BJ (cell line): ENCODE measurements at regions of chr15 and their contacts with region 1.

Region 1: GRCh38 chr15:43514241-43515057 is 3.0 kb upstream of the MAP1A start:
- DNase-seq: no peak
- H3K4me3 ChIP-seq: no peak overlapping the region
- H3K27me3 ChIP-seq: no peaks in the 10 kb centered on the region
- CTCF ChIP-seq: peak; percentile 68

Region 2: GRCh38 chr15:43133430-43134156 is 380.9 kb before region 1 on chr15 and contains the start of gene TMEM62:
- CTCF ChIA-PET with region 1: no interaction called
- POLR2A ChIA-PET with region 1: no interaction called
- DNase-seq: no peak
- H3K4me3 ChIP-seq: peak within 1 kb of the TSS; percentile 62
- H3K27me3 ChIP-seq: no peaks in the 10 kb centered on the region
- CTCF ChIP-seq: no peak
- polyA plus RNA-seq, gene TMEM62: 4.2 and 6.6 TPM in 2 replicates

Region 3: DNA sequence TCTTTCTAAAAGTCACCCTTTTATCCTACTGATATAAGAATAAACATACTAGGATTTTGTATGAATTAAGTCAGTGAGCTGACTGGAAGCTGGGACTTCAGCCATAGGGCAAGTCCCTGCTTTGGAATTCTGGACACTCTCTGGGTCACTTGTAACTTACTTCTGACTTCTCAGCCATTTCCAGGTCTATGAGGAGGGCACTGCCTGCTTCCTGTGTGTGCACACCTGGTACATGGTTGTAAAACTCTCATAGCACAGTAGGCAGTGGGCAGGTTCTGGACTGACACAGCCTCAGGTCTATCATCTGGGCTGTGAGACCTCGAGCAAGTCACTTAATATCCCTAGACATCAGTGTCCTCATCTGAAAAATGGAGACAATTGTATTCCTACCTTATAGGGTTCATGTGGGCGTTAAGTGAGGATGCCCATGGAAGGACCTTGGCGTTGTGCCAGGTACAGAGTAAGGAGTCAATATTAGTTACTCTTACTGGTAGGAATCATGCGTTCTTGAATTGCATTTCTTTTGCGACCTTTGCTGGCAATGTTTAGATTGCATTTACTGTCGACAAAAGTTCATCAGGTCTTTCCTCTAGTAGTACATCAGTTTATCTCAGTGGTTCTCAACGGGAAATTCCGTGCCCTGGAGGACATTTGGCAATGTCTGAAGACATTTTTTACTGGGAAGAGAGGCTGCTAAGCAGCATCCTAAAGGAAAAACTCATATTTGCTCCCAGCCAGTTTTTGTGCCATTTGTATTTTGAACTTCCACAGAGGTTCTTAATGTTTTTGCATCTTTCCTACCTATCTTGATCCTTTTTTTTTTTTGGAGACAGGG is 220.1 kb before region 1 on chr15:
- CTCF ChIA-PET with region 1: no interaction called
- POLR2A ChIA-PET with region 1: no interaction called
- DNase-seq: no peak
- H3K4me3 ChIP-seq: no peak overlapping the region
- H3K27me3 ChIP-seq: peaks cover 23% of the 10 kb centered on the region
- CTCF ChIP-seq: no peak

Region 4: GRCh38 chr15:43440721-43441281 is 73.6 kb before region 1 on chr15:
- CTCF ChIA-PET with region 1: interaction called, 32 read pairs
- POLR2A ChIA-PET with region 1: no interaction called
- DNase-seq: peak; percentile 94
- H3K4me3 ChIP-seq: no peak overlapping the region
- H3K27me3 ChIP-seq: no peaks in the 10 kb centered on the region
- CTCF ChIP-seq: peak; percentile 51

Region 5: DNA sequence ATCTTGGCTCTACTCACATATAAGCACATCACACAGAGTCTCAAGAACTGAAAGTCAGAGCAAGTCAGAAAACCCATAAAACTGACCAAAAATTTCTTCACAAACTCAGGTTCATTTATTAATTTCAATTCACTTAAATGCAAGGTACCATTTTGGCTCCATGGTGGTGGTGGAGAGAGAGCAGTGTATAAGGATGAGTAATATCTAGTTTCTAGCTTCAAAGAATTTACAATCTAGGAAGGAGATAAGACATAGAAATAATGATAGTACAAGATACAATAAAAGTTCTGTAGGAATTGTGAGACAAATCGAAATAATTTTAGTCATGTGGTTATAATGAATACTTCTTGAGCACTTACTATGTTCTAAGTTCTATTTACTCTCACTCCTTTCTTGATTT is 14.8 kb before region 1 on chr15:
- CTCF ChIA-PET with region 1: interaction called, 17 read pairs
- POLR2A ChIA-PET with region 1: no interaction called
- DNase-seq: no peak
- H3K4me3 ChIP-seq: no peak overlapping the region
- H3K27me3 ChIP-seq: no peaks in the 10 kb centered on the region
- CTCF ChIP-seq: no peak

Region 6: DNA sequence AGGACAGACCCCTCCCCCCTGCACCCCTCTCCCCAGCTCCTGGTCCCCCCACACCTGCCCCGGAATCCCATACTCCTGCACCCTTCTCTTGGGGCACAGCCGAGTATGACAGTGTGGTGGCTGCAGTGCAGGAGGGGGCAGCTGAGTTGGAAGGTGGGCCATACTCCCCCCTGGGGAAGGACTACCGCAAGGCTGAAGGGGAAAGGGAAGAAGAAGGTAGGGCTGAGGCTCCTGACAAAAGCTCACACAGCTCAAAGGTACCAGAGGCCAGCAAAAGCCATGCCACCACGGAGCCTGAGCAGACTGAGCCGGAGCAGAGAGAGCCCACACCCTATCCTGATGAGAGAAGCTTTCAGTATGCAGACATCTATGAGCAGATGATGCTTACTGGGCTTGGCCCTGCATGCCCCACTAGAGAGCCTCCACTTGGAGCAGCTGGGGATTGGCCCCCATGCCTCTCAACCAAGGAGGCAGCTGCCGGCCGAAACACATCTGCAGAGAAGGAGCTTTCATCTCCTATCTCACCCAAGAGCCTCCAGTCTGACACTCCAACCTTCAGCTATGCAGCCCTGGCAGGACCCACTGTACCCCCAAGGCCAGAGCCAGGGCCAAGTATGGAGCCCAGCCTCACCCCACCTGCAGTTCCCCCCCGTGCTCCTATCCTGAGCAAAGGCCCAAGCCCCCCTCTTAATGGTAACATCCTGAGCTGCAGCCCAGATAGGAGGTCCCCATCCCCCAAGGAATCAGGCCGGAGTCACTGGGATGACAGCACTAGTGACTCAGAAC is 12.8 kb after region 1 on chr15:
- CTCF ChIA-PET with region 1: interaction called, 22 read pairs
- POLR2A ChIA-PET with region 1: interaction called, 3 read pairs
- DNase-seq: no peak
- H3K4me3 ChIP-seq: no peak overlapping the region
- H3K27me3 ChIP-seq: no peaks in the 10 kb centered on the region
- CTCF ChIP-seq: no peak